ENCODE measurements at regions of chr5 and their contacts with region 1.

Region 1: DNA sequence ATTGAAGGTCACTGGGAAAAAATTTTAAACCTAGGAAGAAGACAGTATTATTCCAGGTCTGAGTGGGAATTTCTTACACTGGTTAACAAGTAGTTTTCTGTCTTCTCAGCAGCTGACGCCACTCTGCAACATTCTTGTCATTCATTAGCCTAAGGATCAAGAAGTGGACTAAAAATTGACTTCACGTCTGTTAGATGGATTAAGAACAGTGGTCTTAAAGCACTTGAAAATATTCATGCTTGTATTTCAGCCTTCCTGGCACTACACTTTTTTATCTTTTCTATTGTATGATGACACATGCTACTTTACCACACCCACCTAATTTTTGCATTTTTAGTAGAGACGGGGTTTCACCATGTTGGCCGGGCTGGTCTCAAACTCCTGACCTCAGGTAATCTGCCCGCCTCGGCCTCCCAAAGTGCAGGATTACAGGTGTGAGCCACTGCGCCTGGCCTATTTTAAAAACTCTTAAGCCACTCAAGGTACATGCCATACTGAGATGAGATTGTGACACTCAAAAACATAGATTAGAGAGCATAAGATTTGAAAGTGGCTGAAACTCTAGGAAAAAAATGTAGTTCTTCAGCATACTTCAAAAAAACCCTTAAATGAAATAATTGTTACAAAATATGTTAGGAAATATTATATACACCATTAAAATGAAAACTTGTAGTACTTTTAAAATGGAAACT is 8.4 kb downstream of the MATR3 start:
- DNase-seq: no peak
- ATAC-seq: no peak
- H3K4me3 ChIP-seq: no peak overlapping the region
- H3K4me3 Mint-ChIP-seq: peak overlapping the region in 9 of 10 donors; percentile 45 to 93 (median 69)
- H3K27ac ChIP-seq: peak overlapping the region; percentile 20
- H3K27ac Mint-ChIP-seq: peak overlapping the region in 5 of 9 donors; percentile 33 to 88 (median 56)
- H3K4me1 ChIP-seq: peaks cover 75 to 85% of the 10 kb centered on the region in 2 donors
- H3K4me1 Mint-ChIP-seq: peaks cover 64 to 100% (median 97%) of the 10 kb centered on the region in 7 donors
- H3K27me3 ChIP-seq: no peaks in the 10 kb centered on the region
- H3K27me3 Mint-ChIP-seq: no peaks in the 10 kb centered on the region

Region 2: GRCh38 chr5:139312075-139312474 is 10.1 kb after region 1 on chr5:
- CTCF ChIA-PET with region 1: interaction called, 3 read pairs
- POLR2A ChIA-PET with region 1: interaction called, 67 read pairs
- intact Hi-C with region 1: loop called in 1 of 2 experiments (anchors 1 kb)
- DNase-seq: no peak
- ATAC-seq: no peak
- H3K4me3 ChIP-seq: no peak overlapping the region
- H3K4me3 Mint-ChIP-seq: peak overlapping the region in 3 of 10 donors; percentile 27 to 53 (median 43)
- H3K27ac ChIP-seq: no peak overlapping the region
- H3K27ac Mint-ChIP-seq: peak overlapping the region in 2 of 9 donors; percentile 12 to 25
- H3K4me1 ChIP-seq: peaks cover 57 to 62% of the 10 kb centered on the region in 2 donors
- H3K4me1 Mint-ChIP-seq: peaks cover 43 to 82% (median 70%) of the 10 kb centered on the region in 7 donors
- H3K27me3 ChIP-seq: no peaks in the 10 kb centered on the region
- H3K27me3 Mint-ChIP-seq: no peaks in the 10 kb centered on the region

Region 3: DNA sequence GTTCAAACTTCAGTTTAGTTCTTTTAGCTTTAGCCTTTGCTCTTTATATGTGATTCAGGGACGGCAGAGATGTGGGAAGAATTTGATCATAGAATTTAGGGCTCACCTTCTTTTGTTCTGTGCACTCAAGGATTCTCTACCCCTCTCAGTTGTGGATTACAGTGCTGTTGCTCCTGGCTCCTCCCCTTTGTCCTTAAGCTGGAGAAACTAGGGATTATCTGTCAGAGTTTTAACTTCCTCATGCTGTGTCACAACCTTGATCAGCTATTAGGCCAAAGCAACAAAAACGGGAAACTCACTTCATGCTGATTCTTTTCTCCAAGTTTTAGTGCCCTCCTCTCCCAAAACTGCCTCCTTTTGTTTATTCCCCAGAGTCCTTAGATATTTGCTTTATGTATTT is 1651.3 kb after region 1 on chr5:
- CTCF ChIA-PET with region 1: no interaction called
- POLR2A ChIA-PET with region 1: no interaction called
- intact Hi-C with region 1: no loop called
- DNase-seq: no peak
- ATAC-seq: no peak
- H3K4me3 ChIP-seq: no peak overlapping the region
- H3K4me3 Mint-ChIP-seq: no peak overlapping the region
- H3K27ac ChIP-seq: no peak overlapping the region
- H3K27ac Mint-ChIP-seq: no peak overlapping the region
- H3K4me1 ChIP-seq: no peaks in the 10 kb centered on the region
- H3K4me1 Mint-ChIP-seq: no peaks in the 10 kb centered on the region
- H3K27me3 ChIP-seq: no peaks in the 10 kb centered on the region
- H3K27me3 Mint-ChIP-seq: peaks cover 0 to 28% (median 13%) of the 10 kb centered on the region in 5 donors

Measured in naive thymus-derived CD4-positive, alpha-beta T cell (primary cell).